Activated naive CD4-positive, alpha-beta T cell treated with anti-CD3 and anti-CD28 coated beads for 36 hours (primary cell): ENCODE measurements at regions of chr3 and their contacts with region 1.

Region 1: DNA sequence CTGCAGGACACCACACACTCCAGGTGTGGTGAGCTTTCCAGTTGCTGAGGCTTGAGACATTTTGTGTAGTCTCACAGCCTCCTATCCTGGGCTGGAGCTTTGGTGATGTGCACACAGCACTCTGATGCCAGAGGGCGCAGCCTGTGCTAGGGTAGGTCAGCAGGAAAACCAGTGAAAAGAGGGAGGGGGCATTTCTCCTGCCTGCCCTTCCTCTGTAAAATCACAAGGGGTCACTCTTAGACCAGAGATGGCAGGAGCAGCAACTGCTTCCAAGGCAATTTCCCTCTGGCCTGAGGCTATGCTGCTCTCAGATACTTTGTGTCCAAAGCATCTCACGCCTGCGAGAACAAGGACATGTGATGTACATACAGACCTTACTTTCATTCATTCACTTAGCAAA is 16.5 kb upstream of the MUSTN1 start:
- DNase-seq: peak; percentile 42
- H3K4me3 Mint-ChIP-seq: no peak overlapping the region
- H3K27ac Mint-ChIP-seq: no peak overlapping the region
- H3K4me1 Mint-ChIP-seq: no peaks in the 10 kb centered on the region
- H3K27me3 Mint-ChIP-seq: no peaks in the 10 kb centered on the region

Region 2: GRCh38 chr3:52838561-52839267 is 12.6 kb before region 1 on chr3:
- CTCF ChIA-PET with region 1: interaction called, 13 read pairs
- intact Hi-C with region 1: no loop called
- DNase-seq: peak; percentile 24
- H3K4me3 Mint-ChIP-seq: no peak overlapping the region
- H3K27ac Mint-ChIP-seq: no peak overlapping the region
- H3K4me1 Mint-ChIP-seq: peaks cover 20% of the 10 kb centered on the region
- H3K27me3 Mint-ChIP-seq: no peaks in the 10 kb centered on the region

Region 3: GRCh38 chr3:52934630-52935530 is 83.5 kb after region 1 on chr3:
- CTCF ChIA-PET with region 1: interaction called, 7 read pairs
- intact Hi-C with region 1: loop called (anchors 1 kb)
- DNase-seq: peak; percentile 76
- H3K4me3 Mint-ChIP-seq: no peak overlapping the region
- H3K27ac Mint-ChIP-seq: no peak overlapping the region
- H3K4me1 Mint-ChIP-seq: peaks cover 10% of the 10 kb centered on the region
- H3K27me3 Mint-ChIP-seq: no peaks in the 10 kb centered on the region

Region 4: DNA sequence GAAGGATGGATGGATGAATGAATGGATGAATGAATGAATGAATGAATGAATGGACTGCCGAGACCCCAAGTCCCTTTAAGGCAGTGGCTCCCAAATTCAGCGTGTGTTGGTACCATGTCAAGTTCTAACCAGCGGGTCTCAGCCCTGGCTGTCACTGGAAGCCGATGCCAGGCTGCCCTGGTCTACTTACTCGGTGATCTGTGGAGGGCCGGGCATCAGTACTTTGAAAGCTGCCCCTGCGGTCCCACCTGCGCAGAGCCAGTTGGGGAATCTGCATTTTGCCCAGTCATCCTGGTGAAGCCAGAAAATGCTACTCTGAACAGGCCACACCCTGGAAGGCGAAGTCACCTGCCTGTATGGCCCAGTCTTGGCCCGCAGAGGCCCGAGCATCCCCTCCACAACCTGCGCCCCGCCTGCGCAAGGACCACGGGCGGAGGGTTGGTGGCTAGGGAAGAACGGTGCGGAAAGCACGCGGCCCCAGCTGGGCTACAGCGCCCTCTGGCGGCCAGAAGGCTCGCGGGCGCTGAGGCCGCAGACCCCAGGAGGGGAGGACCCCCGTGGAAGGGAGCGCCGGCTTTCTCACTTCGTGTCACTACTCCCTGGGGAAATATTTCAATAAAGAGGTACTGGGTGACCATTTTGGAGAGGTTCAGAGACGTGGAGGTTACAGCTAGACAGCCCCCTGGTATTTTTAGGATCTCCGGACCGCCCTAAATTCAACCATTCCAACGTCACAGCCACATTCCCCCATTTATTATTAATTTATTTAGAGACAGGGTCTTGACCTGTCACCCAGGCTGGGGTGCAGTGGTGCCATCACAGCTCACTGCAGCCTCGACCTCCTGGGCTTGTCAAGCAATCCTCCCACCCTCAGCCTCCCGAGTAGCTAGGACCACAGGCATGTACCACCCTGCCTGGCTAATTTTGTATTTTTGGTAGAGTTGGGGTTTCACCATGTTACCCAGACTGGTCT is 344.5 kb after region 1 on chr3:
- CTCF ChIA-PET with region 1: interaction called, 3 read pairs
- intact Hi-C with region 1: loop called (anchors 2 kb)
- DNase-seq: peak; percentile 59
- H3K4me3 Mint-ChIP-seq: no peak overlapping the region
- H3K27ac Mint-ChIP-seq: no peak overlapping the region
- H3K4me1 Mint-ChIP-seq: peaks cover 3% of the 10 kb centered on the region
- H3K27me3 Mint-ChIP-seq: no peaks in the 10 kb centered on the region